Left lung (tissue), 14 donors: ENCODE measurements at regions of chr18 and their contacts with region 1.

Region 1: DNA sequence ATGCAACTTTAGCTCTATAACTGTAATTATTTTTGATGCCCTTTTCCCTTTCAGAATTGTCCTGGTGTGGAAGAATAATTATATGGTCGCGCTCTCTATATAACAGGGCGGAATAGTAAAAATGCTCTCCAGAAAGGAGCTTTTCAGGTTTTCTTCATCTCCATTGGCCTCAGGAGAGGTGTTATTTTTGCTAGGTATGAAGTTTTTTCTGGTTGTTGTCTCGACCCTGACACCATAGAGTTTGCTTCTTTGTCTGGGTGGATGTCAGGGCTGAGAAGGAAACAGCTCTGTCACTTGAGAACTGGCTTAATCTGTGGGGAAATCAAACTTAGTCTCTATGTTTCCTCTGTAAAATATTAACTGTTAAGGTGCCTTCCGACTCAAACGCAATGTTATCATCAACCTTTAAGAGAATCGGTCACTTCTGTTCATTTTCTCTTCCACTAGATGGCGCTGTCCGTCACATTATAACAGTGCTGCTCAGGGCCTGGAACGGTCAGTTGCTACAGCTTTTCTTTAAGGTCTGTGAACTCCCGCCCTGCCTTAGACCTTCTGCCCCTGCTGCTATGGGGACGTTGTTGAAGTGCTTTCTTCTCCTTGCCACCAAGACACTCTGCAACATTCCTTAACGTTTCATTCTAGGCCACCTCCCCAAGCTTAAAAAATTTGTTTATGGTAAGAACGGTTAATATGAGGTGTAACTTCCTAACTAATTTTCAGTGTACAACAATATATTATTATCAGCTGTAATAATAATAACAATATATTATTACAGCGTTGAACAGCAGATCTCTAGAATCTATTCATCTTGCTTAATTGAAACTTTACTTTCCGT is 23.8 kb upstream of the SERPINB12 start:
- DNase-seq: peak in 2 of 4 donors; percentile 66 to 77
- ATAC-seq: peak; percentile 94
- H3K4me3 ChIP-seq: no peak overlapping the region
- H3K27ac ChIP-seq: no peak overlapping the region
- H3K4me1 ChIP-seq: no peaks in the 10 kb centered on the region
- H3K27me3 ChIP-seq: no peaks in the 10 kb centered on the region
- CTCF ChIP-seq: peak; percentile 63 to 64

Region 2: GRCh38 chr18:63578357-63578958 is 60.1 kb after region 1 on chr18:
- intact Hi-C with region 1: loop called in 1 of 2 experiments (anchors 5 kb)
- DNase-seq: peak in 2 of 4 donors; percentile 8 to 37
- ATAC-seq: peak; percentile 82
- H3K4me3 ChIP-seq: no peak overlapping the region
- H3K27ac ChIP-seq: no peak overlapping the region
- H3K4me1 ChIP-seq: peaks cover 0 to 7% of the 10 kb centered on the region in 2 donors
- H3K27me3 ChIP-seq: no peaks in the 10 kb centered on the region
- CTCF ChIP-seq: peak; percentile 54 to 61

Region 3: DNA sequence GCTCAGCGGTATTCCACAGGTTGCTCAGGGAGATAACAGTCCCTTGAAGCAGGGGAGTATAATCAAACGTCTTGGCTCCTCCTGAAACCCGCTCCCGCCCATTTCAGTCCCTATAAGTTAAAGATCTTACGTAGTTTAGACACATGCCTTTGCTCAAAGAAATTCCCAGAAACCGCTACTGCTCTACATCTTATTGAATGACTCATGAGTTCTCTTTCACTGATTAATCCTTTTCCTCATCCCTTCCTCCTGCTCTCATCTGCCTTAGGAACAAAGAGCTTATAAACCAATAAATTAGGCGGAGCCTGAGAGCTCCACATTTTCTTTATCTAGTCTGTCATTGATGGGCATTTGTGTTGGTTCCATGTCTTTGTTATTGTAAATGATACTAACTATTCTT is 129.8 kb after region 1 on chr18:
- intact Hi-C with region 1: no loop called
- DNase-seq: no peak
- ATAC-seq: no peak
- H3K4me3 ChIP-seq: no peak overlapping the region
- H3K27ac ChIP-seq: no peak overlapping the region
- H3K4me1 ChIP-seq: no peaks in the 10 kb centered on the region
- H3K27me3 ChIP-seq: no peaks in the 10 kb centered on the region
- CTCF ChIP-seq: no peak

Region 4: DNA sequence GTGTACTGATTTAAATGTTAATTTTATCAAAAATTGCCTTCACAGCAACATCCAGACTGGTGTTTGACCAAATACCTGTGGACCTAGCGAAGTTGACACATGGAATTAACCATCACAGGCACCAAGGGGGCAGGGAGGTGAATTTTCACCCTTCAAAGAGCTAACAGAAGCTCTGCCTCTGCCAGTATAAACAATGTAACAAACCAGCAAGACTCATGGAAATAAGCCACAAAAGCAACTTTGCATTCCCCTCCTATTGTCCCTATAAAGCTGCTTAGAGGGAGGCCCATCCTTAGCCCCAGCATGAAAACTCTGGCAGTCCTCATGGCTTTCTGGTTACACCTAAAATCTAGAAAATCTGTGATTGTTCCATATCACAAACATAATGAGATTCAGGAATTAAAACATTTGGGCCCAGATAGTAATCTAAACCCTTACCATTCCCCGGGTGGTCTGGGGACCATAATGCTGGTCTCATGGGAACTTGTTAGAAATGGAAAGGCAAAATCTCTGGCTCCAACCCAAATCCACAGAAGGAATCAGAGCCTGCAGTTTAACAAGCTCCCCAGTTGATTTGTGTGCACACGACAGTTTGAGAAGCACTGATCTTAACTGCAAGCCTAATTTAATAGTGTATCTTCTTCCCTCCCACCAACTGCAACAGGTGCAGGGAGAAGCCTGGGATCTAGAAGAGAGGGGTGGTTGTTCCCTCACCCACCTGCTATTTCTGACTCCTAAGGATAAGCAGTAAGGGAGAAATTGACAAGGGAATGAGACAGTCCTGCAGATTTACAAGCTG is 207.5 kb after region 1 on chr18:
- intact Hi-C with region 1: no loop called
- DNase-seq: no peak
- ATAC-seq: no peak
- H3K4me3 ChIP-seq: no peak overlapping the region
- H3K27ac ChIP-seq: no peak overlapping the region
- H3K4me1 ChIP-seq: no peaks in the 10 kb centered on the region
- H3K27me3 ChIP-seq: no peaks in the 10 kb centered on the region
- CTCF ChIP-seq: no peak

Region 5: GRCh38 chr18:63848159-63848558 is 329.8 kb after region 1 on chr18:
- intact Hi-C with region 1: loop called in 1 of 2 experiments (anchors 5 kb)
- DNase-seq: peak in 2 of 4 donors; percentile 6 to 36
- ATAC-seq: peak; percentile 83
- H3K4me3 ChIP-seq: no peak overlapping the region
- H3K27ac ChIP-seq: no peak overlapping the region
- H3K4me1 ChIP-seq: no peaks in the 10 kb centered on the region
- H3K27me3 ChIP-seq: no peaks in the 10 kb centered on the region
- CTCF ChIP-seq: peak; percentile 32 to 49